Right lobe of liver (tissue), 6 donors: ENCODE measurements at regions of chr4 and their contacts with region 1.

Region 1: GRCh38 chr4:38034986-38035882 is 75.0 kb downstream of the PTTG2 start:
- DNase-seq: no peak
- ATAC-seq: peak; percentile 68 to 83 (median 83)
- H3K4me3 ChIP-seq: no peak overlapping the region
- H3K27ac ChIP-seq: no peak overlapping the region
- H3K4me1 ChIP-seq: no peaks in the 10 kb centered on the region
- H3K27me3 ChIP-seq: no peaks in the 10 kb centered on the region
- CTCF ChIP-seq: peak; percentile 58 to 75 (median 68)
- POLR2A ChIP-seq: no peak

Region 2: GRCh38 chr4:37802068-37802666 is 233.1 kb before region 1 on chr4:
- intact Hi-C with region 1: loop called in 1 of 2 experiments (anchors 10 kb)
- DNase-seq: peak in 2 of 3 donors; percentile 52 to 61
- ATAC-seq: peak; percentile 92 to 98 (median 94)
- H3K4me3 ChIP-seq: no peak overlapping the region
- H3K27ac ChIP-seq: no peak overlapping the region
- H3K4me1 ChIP-seq: no peaks in the 10 kb centered on the region
- H3K27me3 ChIP-seq: no peaks in the 10 kb centered on the region
- CTCF ChIP-seq: peak; percentile 59 to 64 (median 62)
- POLR2A ChIP-seq: no peak

Region 3: DNA sequence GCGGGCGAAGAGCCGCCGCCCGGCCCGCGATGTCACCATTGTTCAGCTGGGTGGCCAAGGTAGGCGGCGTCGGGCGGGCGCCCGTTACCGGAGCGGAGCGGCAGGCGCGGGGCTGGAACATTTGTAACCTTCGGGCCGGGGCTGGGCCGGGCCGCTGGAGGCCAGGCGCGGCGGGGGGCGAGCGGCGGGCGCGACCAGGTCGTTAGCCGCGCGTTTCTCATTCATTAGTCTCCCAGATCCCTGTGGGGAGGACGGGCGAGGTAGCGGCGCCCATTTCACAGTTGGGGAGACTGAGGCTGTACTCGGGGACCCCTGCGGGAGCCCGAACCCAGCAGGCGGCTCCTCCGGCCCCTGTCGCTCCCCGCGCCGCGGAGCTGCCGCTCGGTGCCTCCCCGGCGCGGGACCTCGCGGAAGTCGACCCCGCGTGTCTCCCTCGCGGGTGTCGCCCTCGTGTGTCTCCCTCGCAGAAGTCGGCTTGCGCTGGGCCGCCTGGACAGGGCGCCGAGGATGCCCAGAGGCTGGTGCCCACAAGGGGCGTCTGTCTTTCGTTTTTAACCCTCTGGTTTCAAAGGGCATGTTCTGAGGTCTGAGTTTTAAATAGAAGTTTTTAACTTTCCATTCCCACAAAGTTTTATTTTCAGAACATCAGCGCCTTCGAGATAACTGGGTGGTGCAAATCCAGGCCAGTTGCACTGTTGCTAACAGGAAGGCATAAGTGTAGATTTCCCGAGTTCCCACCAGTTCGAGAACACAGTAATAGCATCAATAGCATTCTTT is 57.6 kb before region 1 on chr4:
- intact Hi-C with region 1: loop called in 1 of 2 experiments (anchors 10 kb)
- DNase-seq: peak; percentile 80 to 88 (median 84)
- ATAC-seq: peak; percentile 71 to 84 (median 78)
- H3K4me3 ChIP-seq: peak overlapping the region; percentile 77 to 87 (median 78)
- H3K27ac ChIP-seq: peak overlapping the region; percentile 94 to 99 (median 95)
- H3K4me1 ChIP-seq: peaks cover 0 to 38% (median 5%) of the 10 kb centered on the region in 4 donors
- H3K27me3 ChIP-seq: no peaks in the 10 kb centered on the region
- CTCF ChIP-seq: peak; percentile 65 to 70 (median 68)
- POLR2A ChIP-seq: peak; percentile 42